Caco-2 (cell line): ENCODE measurements at regions of chr10 and their contacts with region 1.

Region 1: DNA sequence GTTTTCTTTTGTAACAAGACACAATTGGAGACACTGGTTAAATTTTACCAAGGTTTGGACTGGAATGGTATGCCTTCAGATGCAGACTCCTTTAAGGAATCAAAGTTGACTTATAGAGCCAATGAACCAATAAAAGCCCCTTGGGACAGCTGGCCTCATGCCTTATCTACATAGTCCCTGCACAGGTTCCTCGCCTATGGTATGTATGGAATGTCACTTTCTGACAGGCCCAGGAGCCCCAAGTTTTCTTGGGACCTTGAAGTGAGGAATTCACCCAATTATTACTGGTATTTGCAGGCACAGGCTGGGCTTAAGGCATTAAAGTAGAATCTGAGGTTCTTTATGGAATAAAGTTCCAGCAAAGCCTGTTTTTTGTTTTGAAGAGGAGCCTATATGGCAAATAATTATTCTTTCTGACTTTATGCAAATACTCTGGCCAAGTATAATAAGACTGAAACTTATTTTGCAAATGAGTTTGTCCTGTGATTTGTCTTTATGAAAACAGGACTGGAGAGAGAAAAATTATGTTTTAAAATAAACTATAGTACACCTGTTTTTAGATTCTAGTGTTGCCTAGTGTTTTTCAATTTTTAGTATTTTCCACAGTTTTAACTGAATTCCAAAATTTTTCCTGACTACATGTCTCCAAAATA is 24.1 kb upstream of the DNMBP start:
- DNase-seq: peak; percentile 70 to 86
- H3K4me3 ChIP-seq: no peak overlapping the region
- H3K4me3 Mint-ChIP-seq: peak overlapping the region; percentile 52
- H3K27ac Mint-ChIP-seq: peak overlapping the region; percentile 71
- H3K4me1 ChIP-seq: peaks cover 62% of the 10 kb centered on the region
- H3K4me1 Mint-ChIP-seq: peaks cover 35% of the 10 kb centered on the region
- H3K27me3 ChIP-seq: no peaks in the 10 kb centered on the region
- H3K27me3 Mint-ChIP-seq: no peaks in the 10 kb centered on the region
- CTCF ChIP-seq: no peak

Region 2: GRCh38 chr10:99648717-99649116 is 385.2 kb before region 1 on chr10:
- CTCF ChIA-PET with region 1: no interaction called
- POLR2A ChIA-PET with region 1: no interaction called
- intact Hi-C with region 1: no loop called
- DNase-seq: no peak
- H3K4me3 ChIP-seq: no peak overlapping the region
- H3K4me3 Mint-ChIP-seq: peak overlapping the region; percentile 21
- H3K27ac Mint-ChIP-seq: peak overlapping the region; percentile 72
- H3K4me1 ChIP-seq: peaks cover 70% of the 10 kb centered on the region
- H3K4me1 Mint-ChIP-seq: peaks cover 52% of the 10 kb centered on the region
- H3K27me3 ChIP-seq: no peaks in the 10 kb centered on the region
- H3K27me3 Mint-ChIP-seq: no peaks in the 10 kb centered on the region
- CTCF ChIP-seq: no peak

Region 3: GRCh38 chr10:100020142-100020885 is 13.6 kb before region 1 on chr10:
- CTCF ChIA-PET with region 1: no interaction called
- POLR2A ChIA-PET with region 1: no interaction called
- intact Hi-C with region 1: loop called (anchors 1 kb)
- DNase-seq: no peak
- H3K4me3 ChIP-seq: no peak overlapping the region
- H3K4me3 Mint-ChIP-seq: peak overlapping the region; percentile 60
- H3K27ac Mint-ChIP-seq: peak overlapping the region; percentile 27
- H3K4me1 ChIP-seq: peaks cover 25% of the 10 kb centered on the region
- H3K4me1 Mint-ChIP-seq: peaks cover 15% of the 10 kb centered on the region
- H3K27me3 ChIP-seq: no peaks in the 10 kb centered on the region
- H3K27me3 Mint-ChIP-seq: no peaks in the 10 kb centered on the region
- CTCF ChIP-seq: no peak